T-cell (primary cell): ENCODE measurements at regions of chr14 and their contacts with region 1.

Region 1: GRCh38 chr14:80987235-80988032 is 32.0 kb downstream of the TSHR start:
- DNase-seq: peak; percentile 10 to 85 (median 53)
- ATAC-seq: peak; percentile 64 to 76 (median 67)
- H3K4me3 ChIP-seq: no peak overlapping the region
- H3K4me3 Mint-ChIP-seq: no peak overlapping the region
- H3K27ac ChIP-seq: no peak overlapping the region
- H3K27ac Mint-ChIP-seq: no peak overlapping the region
- H3K4me1 ChIP-seq: no peaks in the 10 kb centered on the region
- H3K4me1 Mint-ChIP-seq: no peaks in the 10 kb centered on the region
- H3K27me3 ChIP-seq: peaks cover 0 to 4% of the 10 kb centered on the region in 2 experiments
- H3K27me3 Mint-ChIP-seq: peaks cover 1 to 3% of the 10 kb centered on the region in 2 donors

Region 2: DNA sequence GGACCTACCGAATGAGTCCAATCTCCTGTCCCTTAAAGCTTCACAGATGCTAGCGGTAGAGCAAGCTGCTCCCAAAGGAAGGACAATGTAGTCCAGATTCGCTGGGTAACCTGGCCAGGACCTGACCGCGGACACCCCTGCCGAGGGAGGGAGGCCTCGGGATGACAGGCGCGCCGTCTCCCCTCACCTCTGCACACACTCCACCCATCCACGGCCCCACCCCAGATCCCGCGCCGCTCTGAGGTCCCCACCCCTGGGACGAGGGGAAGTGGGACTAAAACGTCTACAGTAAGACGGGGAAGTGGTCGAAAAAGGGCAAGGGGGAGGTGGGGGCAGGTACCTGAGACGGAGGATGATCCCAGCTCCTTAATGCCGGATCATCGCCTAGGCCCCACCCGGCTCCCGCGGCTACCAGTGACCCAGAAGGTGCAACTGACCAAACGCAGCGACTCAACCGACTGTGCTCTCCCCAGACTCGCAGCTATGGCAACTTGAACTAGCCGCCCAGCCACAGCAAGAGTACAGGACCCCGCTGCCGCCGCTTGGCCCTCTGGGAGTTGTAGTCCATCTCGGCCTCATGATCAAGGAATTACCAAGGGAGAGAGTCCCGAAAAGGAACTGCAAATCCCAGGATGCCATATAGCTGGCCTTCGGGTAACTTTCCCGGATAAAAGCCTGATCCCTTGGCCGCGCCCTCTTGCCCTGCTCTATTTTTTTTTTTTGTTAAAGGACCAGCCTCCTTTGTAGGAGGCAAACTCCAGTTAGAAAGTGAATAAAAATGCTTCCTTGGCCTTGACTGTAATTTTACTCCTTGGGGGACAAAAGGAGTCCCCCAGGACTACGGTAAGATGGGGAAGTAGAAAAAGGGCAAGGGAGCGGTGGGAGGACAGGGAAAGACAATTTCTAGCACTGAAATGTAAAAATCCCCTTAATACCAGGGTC is 45.9 kb before region 1 on chr14 and contains the start of gene CEP128:
- CTCF ChIA-PET with region 1: interaction called in 1 of 2 experiments, 11 read pairs
- POLR2A ChIA-PET with region 1: no interaction called
- DNase-seq: peak; percentile 54 to 88 (median 72)
- ATAC-seq: peak; percentile 93 to 98 (median 96)
- H3K4me3 ChIP-seq: peak within 1 kb of the TSS; percentile 67 to 98
- H3K4me3 Mint-ChIP-seq: peak within 1 kb of the TSS; percentile 87 to 92 (median 87)
- H3K27ac ChIP-seq: peak within 1 kb of the TSS; percentile 49
- H3K27ac Mint-ChIP-seq: peak within 1 kb of the TSS; percentile 88 to 90
- H3K4me1 ChIP-seq: peaks cover 13 to 15% of the 10 kb centered on the region in 2 experiments
- H3K4me1 Mint-ChIP-seq: peaks cover 16 to 31% (median 29%) of the 10 kb centered on the region in 3 donors
- H3K27me3 ChIP-seq: no peaks in the 10 kb centered on the region
- H3K27me3 Mint-ChIP-seq: peaks cover 0 to 5% of the 10 kb centered on the region in 2 donors
- total RNA-seq, gene CEP128: 12.6 to 24.8 (median 15.2) TPM

Region 3: DNA sequence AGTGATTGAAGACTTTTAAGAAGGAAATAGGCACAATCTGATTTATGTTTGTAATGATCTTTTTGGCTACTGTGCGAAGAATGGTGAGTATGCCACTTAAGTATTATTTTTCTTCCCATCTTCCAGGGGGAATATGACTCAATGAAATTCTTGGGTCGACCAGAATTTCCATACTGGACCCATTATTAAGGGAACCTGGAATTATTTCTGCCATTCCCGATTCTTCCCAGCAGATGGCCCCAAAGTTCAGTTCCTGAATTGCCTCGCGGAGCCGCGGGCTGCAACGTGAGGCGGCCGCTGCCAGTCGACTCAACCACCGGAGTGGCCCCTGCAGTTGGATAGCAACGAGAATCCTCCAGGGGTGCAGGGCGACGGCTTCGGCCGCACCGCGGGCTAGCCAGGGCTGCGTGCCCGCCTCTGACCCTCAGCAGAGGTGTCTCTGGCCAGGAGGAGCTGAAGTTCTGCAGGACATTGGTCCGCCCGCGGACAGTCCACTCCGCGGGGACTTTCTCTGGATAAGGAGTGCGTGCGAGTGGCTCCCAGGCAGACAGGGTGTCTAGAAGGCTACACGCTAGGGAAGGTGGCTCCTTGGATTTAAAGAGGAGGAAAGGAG is 32.6 kb before region 1 on chr14:
- CTCF ChIA-PET with region 1: interaction called, 17 to 85 read pairs
- POLR2A ChIA-PET with region 1: interaction called, 3 to 4 read pairs
- DNase-seq: peak; percentile 40 to 84 (median 64)
- ATAC-seq: peak; percentile 66 to 72 (median 70)
- H3K4me3 ChIP-seq: peak overlapping the region; percentile 69 to 97
- H3K4me3 Mint-ChIP-seq: peak overlapping the region; percentile 87 to 98 (median 88)
- H3K27ac ChIP-seq: no peak overlapping the region
- H3K27ac Mint-ChIP-seq: peak overlapping the region; percentile 25 to 37
- H3K4me1 ChIP-seq: peaks cover 16 to 19% of the 10 kb centered on the region in 2 experiments
- H3K4me1 Mint-ChIP-seq: peaks cover 35 to 46% (median 43%) of the 10 kb centered on the region in 3 donors
- H3K27me3 ChIP-seq: peaks cover 0 to 10% of the 10 kb centered on the region in 2 experiments
- H3K27me3 Mint-ChIP-seq: no peaks in the 10 kb centered on the region

Region 4: GRCh38 chr14:80973931-80974641 is 13.3 kb before region 1 on chr14:
- CTCF ChIA-PET with region 1: interaction called, 16 to 37 read pairs
- POLR2A ChIA-PET with region 1: interaction called in 1 of 2 experiments, 7 read pairs
- DNase-seq: peak in 4 of 35 experiments; percentile 10 to 25 (median 12)
- ATAC-seq: peak; percentile 33 to 50 (median 40)
- H3K4me3 ChIP-seq: no peak overlapping the region
- H3K4me3 Mint-ChIP-seq: peak overlapping the region in 1 of 3 donors; percentile 31
- H3K27ac ChIP-seq: no peak overlapping the region
- H3K27ac Mint-ChIP-seq: peak overlapping the region in 1 of 2 donors; percentile 64
- H3K4me1 ChIP-seq: peaks cover 2 to 6% of the 10 kb centered on the region in 2 experiments
- H3K4me1 Mint-ChIP-seq: peaks cover 21 to 35% (median 25%) of the 10 kb centered on the region in 3 donors
- H3K27me3 ChIP-seq: no peaks in the 10 kb centered on the region
- H3K27me3 Mint-ChIP-seq: peaks cover 2 to 3% of the 10 kb centered on the region in 2 donors

Region 5: DNA sequence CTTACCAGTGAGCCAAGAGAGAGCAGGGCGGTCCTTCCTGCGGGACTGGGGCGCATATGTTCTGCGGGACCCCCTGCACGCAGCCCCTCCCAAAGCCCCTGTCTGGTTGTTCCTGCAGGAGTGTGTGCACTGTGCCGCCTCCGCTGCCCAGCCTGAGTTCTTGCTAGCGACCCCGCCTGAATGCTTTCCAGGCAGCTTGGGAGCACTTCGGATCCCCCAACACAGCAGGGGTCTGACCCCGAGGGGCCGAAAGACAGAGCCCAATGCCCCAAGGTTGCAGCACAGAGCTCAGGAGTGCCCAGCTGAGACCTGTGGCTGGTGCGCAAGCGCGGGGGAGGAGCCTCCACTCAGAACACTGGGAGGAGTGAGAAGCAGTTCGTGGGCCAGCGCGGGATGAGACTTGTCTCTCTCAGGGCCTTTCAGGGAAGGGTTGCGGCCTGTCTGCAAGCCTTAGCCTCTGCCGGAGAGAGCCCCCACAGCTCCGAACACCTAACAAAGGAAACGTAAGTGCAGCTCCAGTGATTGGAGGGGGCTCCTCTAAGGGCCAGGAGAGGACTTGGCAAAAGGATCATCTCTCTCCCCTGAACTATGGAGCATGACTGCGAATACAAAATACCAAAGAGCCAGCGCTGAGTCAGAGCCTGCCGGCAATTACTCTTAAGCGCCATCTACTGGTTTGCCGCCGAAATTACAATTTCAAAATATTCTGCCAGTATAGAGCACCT is 182.8 kb after region 1 on chr14:
- CTCF ChIA-PET with region 1: interaction called, 3 to 14 read pairs
- POLR2A ChIA-PET with region 1: no interaction called
- DNase-seq: peak; percentile 76 to 92 (median 85)
- ATAC-seq: peak; percentile 98 to 99 (median 98)
- H3K4me3 ChIP-seq: peak overlapping the region; percentile 74 to 85
- H3K4me3 Mint-ChIP-seq: peak overlapping the region; percentile 85 to 89 (median 88)
- H3K27ac ChIP-seq: peak overlapping the region; percentile 80
- H3K27ac Mint-ChIP-seq: peak overlapping the region; percentile 93 to 97
- H3K4me1 ChIP-seq: peaks cover 8 to 17% of the 10 kb centered on the region in 2 experiments
- H3K4me1 Mint-ChIP-seq: peaks cover 20 to 27% (median 24%) of the 10 kb centered on the region in 3 donors
- H3K27me3 ChIP-seq: no peaks in the 10 kb centered on the region
- H3K27me3 Mint-ChIP-seq: no peaks in the 10 kb centered on the region